ENCODE measurements at regions of chr15 and their contacts with region 1.

Region 1: GRCh38 chr15:66803182-66803729 is 101.2 kb downstream of the SMAD6 start:
- DNase-seq: peak; percentile 98
- H3K4me3 ChIP-seq: no peak overlapping the region
- H3K27ac ChIP-seq: peak overlapping the region; percentile 97
- H3K4me1 ChIP-seq: peaks cover 31% of the 10 kb centered on the region
- H3K27me3 ChIP-seq: no peaks in the 10 kb centered on the region
- CTCF ChIP-seq: no peak
- POLR2A ChIP-seq: peak; percentile 27

Region 2: GRCh38 chr15:66765478-66766281 is 37.6 kb before region 1 on chr15:
- CTCF ChIA-PET with region 1: no interaction called
- POLR2A ChIA-PET with region 1: no interaction called
- dilution Hi-C with region 1: no loop called
- intact Hi-C with region 1: loop called (anchors 2 kb)
- DNase-seq: peak; percentile 93
- H3K4me3 ChIP-seq: no peak overlapping the region
- H3K27ac ChIP-seq: peak overlapping the region; percentile 84
- H3K4me1 ChIP-seq: peaks cover 66% of the 10 kb centered on the region
- H3K27me3 ChIP-seq: no peaks in the 10 kb centered on the region
- CTCF ChIP-seq: no peak
- POLR2A ChIP-seq: peak; percentile 30

Region 3: GRCh38 chr15:66789029-66790025 is 13.9 kb before region 1 on chr15:
- CTCF ChIA-PET with region 1: interaction called, 18 read pairs
- POLR2A ChIA-PET with region 1: no interaction called
- dilution Hi-C with region 1: no loop called
- intact Hi-C with region 1: no loop called
- DNase-seq: peak; percentile 57
- H3K4me3 ChIP-seq: no peak overlapping the region
- H3K27ac ChIP-seq: no peak overlapping the region
- H3K4me1 ChIP-seq: no peaks in the 10 kb centered on the region
- H3K27me3 ChIP-seq: no peaks in the 10 kb centered on the region
- CTCF ChIP-seq: peak; percentile 54 to 67
- POLR2A ChIP-seq: no peak

Region 4: GRCh38 chr15:66815322-66815721 is 12.1 kb after region 1 on chr15:
- CTCF ChIA-PET with region 1: interaction called, 3 read pairs
- POLR2A ChIA-PET with region 1: no interaction called
- dilution Hi-C with region 1: no loop called
- intact Hi-C with region 1: loop called (anchors 1 kb)
- DNase-seq: peak; percentile 53
- H3K4me3 ChIP-seq: no peak overlapping the region
- H3K27ac ChIP-seq: no peak overlapping the region
- H3K4me1 ChIP-seq: peaks cover 7% of the 10 kb centered on the region
- H3K27me3 ChIP-seq: no peaks in the 10 kb centered on the region
- CTCF ChIP-seq: no peak
- POLR2A ChIP-seq: no peak

Region 5: GRCh38 chr15:66841953-66842681 is 38.9 kb after region 1 on chr15:
- CTCF ChIA-PET with region 1: interaction called, 6 read pairs
- POLR2A ChIA-PET with region 1: no interaction called
- dilution Hi-C with region 1: no loop called
- intact Hi-C with region 1: loop called (anchors 1 kb)
- DNase-seq: peak; percentile 93
- H3K4me3 ChIP-seq: peak overlapping the region in 2 of 3 experiments; percentile 45 to 50
- H3K27ac ChIP-seq: peak overlapping the region; percentile 89
- H3K4me1 ChIP-seq: peaks cover 15% of the 10 kb centered on the region
- H3K27me3 ChIP-seq: no peaks in the 10 kb centered on the region
- CTCF ChIP-seq: no peak
- POLR2A ChIP-seq: no peak

Measured in endothelial cell of umbilical vein (primary cell).